ENCODE measurements at regions of chr9 and their contacts with region 1.

Region 1: DNA sequence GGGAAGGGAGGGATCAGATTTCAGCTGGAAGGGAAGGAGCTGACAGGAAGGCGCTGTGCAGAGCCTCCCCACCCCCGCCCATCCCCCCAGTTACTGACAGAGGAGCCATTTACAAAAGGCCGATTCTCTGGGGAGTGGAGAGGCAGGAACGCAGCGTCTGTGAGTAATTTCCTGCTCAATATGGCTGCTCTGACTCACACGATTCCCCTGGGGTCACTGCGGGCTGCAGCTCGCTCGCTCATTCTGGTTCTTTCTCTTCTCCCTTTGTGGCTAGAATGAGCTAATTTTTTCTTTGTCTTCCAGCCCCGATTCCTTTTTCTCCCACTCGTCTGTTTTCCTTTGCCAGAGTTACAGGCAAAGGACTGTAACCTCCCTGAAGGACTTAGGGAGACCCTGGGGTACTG is 28.8 kb downstream of the PTPA start:
- DNase-seq: peak; percentile 80
- H3K4me3 Mint-ChIP-seq: peak overlapping the region; percentile 71
- H3K27ac Mint-ChIP-seq: peak overlapping the region; percentile 97
- H3K4me1 Mint-ChIP-seq: peaks cover 25% of the 10 kb centered on the region
- H3K27me3 Mint-ChIP-seq: no peaks in the 10 kb centered on the region
- CTCF ChIP-seq: no peak

Region 2: DNA sequence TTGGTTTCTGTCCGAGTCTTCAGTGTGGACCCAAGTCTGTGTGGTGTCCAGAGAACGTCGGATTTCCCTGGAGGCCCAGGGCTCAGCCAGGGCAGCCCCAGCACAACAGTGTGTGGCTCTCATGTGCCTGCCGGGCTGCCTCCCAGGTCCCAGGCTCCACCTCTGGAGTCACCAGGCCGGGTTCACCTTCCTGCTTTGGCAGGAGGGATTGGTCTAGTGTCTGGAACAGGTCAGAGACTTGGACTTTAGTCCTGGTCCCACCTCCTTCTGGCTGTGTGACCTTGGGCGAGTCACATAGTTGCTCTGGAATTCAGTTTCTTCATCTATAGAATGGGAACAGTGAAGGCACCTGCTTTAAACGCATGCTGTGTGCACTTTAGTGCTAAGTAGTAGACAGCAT is 55.9 kb before region 1 on chr9:
- CTCF ChIA-PET with region 1: no interaction called
- intact Hi-C with region 1: no loop called
- DNase-seq: no peak
- H3K4me3 Mint-ChIP-seq: no peak overlapping the region
- H3K27ac Mint-ChIP-seq: no peak overlapping the region
- H3K4me1 Mint-ChIP-seq: no peaks in the 10 kb centered on the region
- H3K27me3 Mint-ChIP-seq: no peaks in the 10 kb centered on the region
- CTCF ChIP-seq: no peak

Region 3: DNA sequence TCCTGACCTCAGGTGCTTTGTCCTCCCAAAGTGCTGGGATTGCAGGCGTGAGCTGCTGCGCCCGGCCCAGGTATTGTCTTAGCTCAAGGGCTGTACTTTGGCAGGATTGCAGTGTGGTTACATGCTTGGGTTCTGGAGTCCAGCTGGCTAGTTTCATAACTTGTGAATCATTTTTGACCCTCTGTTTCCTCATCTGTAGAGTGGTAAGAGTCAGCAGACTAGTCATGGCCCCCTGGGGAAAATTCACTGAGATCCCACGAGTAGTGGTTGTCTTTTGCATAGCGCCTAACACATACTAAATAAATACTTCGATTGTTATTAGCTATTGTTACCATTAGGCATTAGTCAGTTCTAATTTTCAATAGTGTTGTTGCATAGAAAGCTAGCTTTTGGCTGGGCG is 14.5 kb before region 1 on chr9:
- CTCF ChIA-PET with region 1: no interaction called
- intact Hi-C with region 1: no loop called
- DNase-seq: no peak
- H3K4me3 Mint-ChIP-seq: no peak overlapping the region
- H3K27ac Mint-ChIP-seq: no peak overlapping the region
- H3K4me1 Mint-ChIP-seq: no peaks in the 10 kb centered on the region
- H3K27me3 Mint-ChIP-seq: no peaks in the 10 kb centered on the region
- CTCF ChIP-seq: no peak

Region 4: GRCh38 chr9:129177791-129178559 is 38.0 kb after region 1 on chr9 and contains the start of gene IER5L:
- CTCF ChIA-PET with region 1: interaction called, 19 read pairs
- intact Hi-C with region 1: loop called (anchors 5 kb)
- DNase-seq: peak; percentile 93
- H3K4me3 Mint-ChIP-seq: peak within 1 kb of the TSS; percentile 94
- H3K27ac Mint-ChIP-seq: peak within 1 kb of the TSS; percentile 78
- H3K4me1 Mint-ChIP-seq: peaks cover 31% of the 10 kb centered on the region
- H3K27me3 Mint-ChIP-seq: no peaks in the 10 kb centered on the region
- CTCF ChIP-seq: no peak
- total RNA-seq, gene IER5L: 53.1 and 60.3 TPM in 2 replicates

Region 5: DNA sequence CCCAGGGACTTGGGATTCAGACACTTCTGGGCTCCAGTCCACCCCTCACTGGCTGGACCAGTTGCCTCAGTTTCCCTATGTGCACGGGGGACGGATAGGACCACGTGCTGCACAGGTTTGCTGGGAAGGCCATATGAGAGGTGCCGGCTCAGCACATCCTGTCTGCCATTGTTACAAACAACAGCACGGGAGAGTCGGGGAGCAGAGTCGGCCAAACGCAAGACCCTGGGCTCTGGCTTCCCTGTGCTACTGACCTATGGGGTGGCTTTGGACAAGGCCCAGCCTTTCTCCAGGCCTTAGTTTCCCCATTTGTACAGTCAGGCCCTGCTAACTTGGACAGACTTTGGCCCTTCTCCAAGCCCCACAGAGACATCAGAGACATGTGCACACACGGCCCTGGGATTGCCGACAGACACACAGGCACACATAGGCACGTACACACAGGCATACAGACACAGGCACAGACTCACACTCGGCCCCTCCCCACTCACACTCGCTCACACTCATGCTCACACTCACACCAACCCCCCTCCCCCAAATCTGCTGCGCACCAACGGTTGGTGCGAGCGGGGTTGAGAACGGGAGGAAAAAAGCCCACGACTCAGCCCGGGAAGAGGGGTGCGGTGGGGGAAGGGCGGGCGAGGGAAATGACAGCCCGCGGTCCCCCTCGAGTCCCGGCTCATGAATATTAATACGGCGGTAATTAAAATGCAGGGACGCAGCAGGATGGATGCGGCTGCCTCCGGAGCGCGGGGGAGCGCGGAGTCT is 347.8 kb after region 1 on chr9:
- CTCF ChIA-PET with region 1: no interaction called
- intact Hi-C with region 1: loop called (anchors 5 kb)
- DNase-seq: no peak
- H3K4me3 Mint-ChIP-seq: peak overlapping the region; percentile 59
- H3K27ac Mint-ChIP-seq: peak overlapping the region; percentile 98
- H3K4me1 Mint-ChIP-seq: peaks cover 65% of the 10 kb centered on the region
- H3K27me3 Mint-ChIP-seq: no peaks in the 10 kb centered on the region
- CTCF ChIP-seq: no peak

Region 6: DNA sequence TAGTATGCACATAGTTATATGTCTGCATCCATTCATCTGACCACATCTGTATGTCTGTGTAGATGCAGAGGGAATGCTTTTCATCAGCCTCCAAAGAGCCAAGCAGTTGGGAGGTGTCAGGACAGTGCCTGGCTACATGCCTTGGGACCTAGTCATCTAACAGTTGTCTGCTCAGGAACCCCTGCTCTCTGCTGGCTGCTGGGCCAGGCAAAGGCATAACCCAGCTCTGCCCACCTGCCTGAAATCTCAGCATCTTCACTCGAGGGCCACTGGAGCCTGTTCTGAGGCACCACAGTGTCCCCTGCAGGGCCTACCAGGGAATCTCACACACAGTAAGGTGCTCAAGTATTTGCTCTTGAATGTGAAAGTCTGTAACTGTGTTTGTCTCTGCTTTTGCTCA is 477.2 kb after region 1 on chr9:
- CTCF ChIA-PET with region 1: interaction called, 3 read pairs
- intact Hi-C with region 1: loop called (anchors 2 kb)
- DNase-seq: peak; percentile 44
- H3K4me3 Mint-ChIP-seq: no peak overlapping the region
- H3K27ac Mint-ChIP-seq: no peak overlapping the region
- H3K4me1 Mint-ChIP-seq: no peaks in the 10 kb centered on the region
- H3K27me3 Mint-ChIP-seq: no peaks in the 10 kb centered on the region
- CTCF ChIP-seq: no peak

Region 7: GRCh38 chr9:129624168-129624759 is 484.3 kb after region 1 on chr9:
- CTCF ChIA-PET with region 1: interaction called, 16 read pairs
- intact Hi-C with region 1: loop called (anchors 1 kb)
- DNase-seq: peak; percentile 73
- H3K4me3 Mint-ChIP-seq: no peak overlapping the region
- H3K27ac Mint-ChIP-seq: no peak overlapping the region
- H3K4me1 Mint-ChIP-seq: peaks cover 29% of the 10 kb centered on the region
- H3K27me3 Mint-ChIP-seq: no peaks in the 10 kb centered on the region
- CTCF ChIP-seq: peak; percentile 61

Region 8: GRCh38 chr9:129776938-129777768 is 637.2 kb after region 1 on chr9:
- CTCF ChIA-PET with region 1: no interaction called
- intact Hi-C with region 1: loop called (anchors 10 kb)
- DNase-seq: peak; percentile 87
- H3K4me3 Mint-ChIP-seq: peak overlapping the region; percentile 22
- H3K27ac Mint-ChIP-seq: peak overlapping the region; percentile 82
- H3K4me1 Mint-ChIP-seq: peaks cover 26% of the 10 kb centered on the region
- H3K27me3 Mint-ChIP-seq: no peaks in the 10 kb centered on the region
- CTCF ChIP-seq: no peak

Measured in Calu3 (cell line).